ENCODE measurements at regions of chr7 and their contacts with region 1.

Region 1: DNA sequence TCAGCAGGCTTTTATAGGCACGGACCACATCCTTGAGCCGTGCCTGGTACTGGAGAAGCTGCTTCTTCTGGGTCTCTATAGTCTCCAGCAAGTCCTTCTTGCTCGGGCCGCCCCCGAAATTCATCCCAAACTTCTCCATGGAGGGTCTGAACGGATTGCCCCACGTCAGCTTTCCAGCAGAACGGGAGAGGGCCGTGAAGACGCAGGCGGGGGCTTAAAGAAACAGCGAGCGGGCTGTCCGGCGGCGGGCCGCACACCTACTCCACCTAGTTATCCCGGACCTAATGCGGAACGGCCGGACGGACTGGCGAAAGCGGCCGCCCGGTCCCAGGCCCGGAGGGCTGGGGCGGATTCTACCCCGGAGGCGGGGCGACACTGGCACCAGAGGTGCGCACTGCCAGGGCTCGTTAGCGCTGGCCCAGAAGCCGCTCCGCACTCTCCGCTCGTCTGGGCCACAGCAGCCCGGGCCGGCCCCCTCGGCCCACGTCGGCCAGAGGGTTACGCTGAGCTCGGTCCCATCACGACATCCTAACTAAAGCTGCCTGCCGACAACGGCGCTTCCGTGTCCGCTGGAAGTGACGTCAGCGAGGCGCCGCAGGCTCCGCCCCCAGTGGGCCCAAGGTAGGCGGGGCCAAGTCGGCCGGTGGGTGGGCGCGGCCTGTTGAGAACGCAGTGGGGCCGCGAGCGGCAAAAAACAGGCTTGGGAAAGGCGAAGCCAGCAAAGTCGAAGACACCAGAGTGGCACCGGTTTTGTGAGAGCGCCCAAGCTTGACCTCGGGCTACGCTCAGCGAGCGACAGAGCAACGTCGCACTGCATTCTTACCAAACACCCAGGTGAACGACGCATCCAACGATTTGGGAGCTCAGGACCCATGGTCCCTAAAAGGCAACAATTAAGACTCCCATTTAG is at the start of gene GCC1:
- DNase-seq: peak; percentile 90 to 97 (median 93)
- H3K4me3 ChIP-seq: peak within 1 kb of the TSS; percentile 64 to 100 (median 95)
- H3K27ac ChIP-seq: peak within 1 kb of the TSS in 57 of 59 donors; percentile 21 to 94 (median 82)
- H3K27me3 ChIP-seq: no peaks in the 10 kb centered on the region
- CTCF ChIP-seq: peak in 16 of 56 donors; percentile 1 to 42 (median 20)
- total RNA-seq, gene GCC1: 9.6 to 17.6 (median 12.6) TPM

Region 2: DNA sequence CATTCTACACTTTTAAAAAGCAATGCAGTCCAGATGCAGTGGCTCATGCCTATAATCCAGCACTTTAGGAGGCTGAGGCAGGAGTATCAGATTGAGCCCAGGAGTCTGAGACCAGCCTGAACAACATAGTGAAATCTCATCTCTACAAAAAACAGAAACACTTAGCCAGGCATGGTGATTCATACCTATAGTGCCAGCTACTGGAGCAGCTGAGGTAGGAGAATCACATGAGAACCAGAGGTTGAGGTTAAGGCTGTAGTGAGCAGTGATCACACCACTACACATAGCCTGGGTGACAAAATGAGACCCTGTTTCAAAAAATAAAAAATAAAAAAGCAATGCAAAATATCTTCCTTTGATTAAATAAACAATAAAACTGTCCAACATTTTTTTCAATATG is 537.8 kb before region 1 on chr7:
- intact Hi-C with region 1: no loop called
- DNase-seq: no peak
- H3K4me3 ChIP-seq: no peak overlapping the region
- H3K27ac ChIP-seq: no peak overlapping the region
- H3K27me3 ChIP-seq: no peaks in the 10 kb centered on the region
- CTCF ChIP-seq: no peak

Region 3: DNA sequence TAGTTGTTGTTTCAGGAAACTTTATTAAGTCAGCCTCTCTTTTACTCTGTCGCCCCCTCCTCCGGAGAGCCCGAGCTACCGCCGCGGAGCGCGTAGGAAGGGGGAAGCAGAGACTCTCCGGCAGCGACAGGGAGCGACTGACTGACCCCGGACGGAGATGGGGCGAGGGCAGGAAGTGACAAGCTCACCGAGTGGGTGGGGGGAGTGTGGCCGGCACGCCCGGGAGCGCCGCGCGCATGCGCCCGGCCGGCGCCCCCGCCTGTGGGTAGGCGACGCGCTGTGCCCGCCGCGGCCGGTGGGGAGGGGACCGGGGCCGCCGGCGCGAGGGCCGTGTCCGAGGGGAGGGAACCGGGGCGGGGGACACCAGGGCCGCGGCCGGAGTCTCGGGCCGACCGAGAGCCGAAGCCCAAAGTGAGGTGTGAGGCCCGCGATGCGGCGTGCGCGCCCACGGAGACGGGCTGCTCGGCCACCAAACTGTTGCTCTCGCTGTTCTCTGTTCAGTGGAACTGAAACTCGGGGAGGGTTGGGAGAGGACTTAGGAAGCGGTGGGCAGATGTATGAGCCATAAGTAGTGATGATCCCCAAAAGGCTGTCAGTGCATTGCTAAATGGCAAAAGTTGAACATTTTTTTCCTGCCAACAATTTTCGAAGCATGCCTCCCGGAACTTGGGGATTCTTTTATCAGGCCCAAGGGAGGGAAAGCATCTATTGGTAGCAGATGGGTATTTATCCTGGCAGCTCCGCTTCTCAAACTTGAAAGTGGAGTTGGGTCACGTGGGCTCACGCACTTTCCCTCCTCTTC is 192.5 kb before region 1 on chr7 and contains the start of gene ZNF800:
- intact Hi-C with region 1: loop called (anchors 5 to 10 kb)
- DNase-seq: peak; percentile 77 to 94 (median 91)
- H3K4me3 ChIP-seq: peak within 1 kb of the TSS; percentile 61 to 100 (median 96)
- H3K27ac ChIP-seq: peak within 1 kb of the TSS; percentile 42 to 97 (median 93)
- H3K27me3 ChIP-seq: no peaks in the 10 kb centered on the region
- CTCF ChIP-seq: peak in 14 of 56 donors; percentile 4 to 34 (median 14)
- total RNA-seq, gene ZNF800: 34.6 to 62.9 (median 48.6) TPM

Region 4: DNA sequence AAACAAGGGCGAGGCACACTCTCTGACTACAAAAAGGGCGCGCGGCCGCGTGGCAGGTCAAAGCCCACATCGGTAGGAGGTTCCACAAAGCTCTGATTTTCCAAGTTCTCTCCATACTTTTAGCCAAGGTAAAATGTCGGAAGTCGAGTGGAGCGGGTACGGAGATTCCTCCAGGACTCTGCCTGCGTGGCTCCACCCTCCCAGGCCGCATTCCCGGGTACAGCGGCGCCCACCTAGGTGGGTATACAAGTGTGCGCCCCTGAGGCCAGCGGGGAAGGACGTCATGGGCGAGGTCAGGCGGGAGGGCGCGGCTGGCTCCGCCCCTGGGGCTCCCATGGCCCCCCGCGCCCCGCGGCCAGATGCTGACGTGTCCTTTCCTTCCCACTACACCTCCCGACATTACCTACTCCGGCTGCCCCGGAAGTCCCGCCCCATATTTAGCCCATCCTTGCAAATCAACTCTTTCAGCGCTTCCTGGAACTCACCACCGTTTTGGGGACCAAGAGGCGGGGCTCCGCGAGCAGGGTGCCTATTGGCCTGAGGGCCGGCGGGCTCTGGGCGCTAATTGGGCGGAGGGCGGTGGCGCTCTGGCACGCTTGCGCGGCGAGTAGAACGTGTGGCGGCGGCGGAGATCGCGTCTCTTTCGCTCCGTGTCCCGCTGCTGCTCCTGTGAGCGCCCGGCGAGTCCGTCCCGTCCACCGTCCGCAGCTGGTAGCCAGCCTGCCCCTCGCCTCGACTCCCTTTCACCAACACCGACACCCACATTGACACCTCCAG is 66.4 kb after region 1 on chr7 and contains the start of gene SND1:
- intact Hi-C with region 1: loop called (anchors 2 kb)
- DNase-seq: peak; percentile 96 to 99 (median 99)
- H3K4me3 ChIP-seq: peak within 1 kb of the TSS; percentile 67 to 100 (median 94)
- H3K27ac ChIP-seq: peak within 1 kb of the TSS in 58 of 59 donors; percentile 29 to 98 (median 88)
- H3K27me3 ChIP-seq: no peaks in the 10 kb centered on the region
- CTCF ChIP-seq: peak in 37 of 56 donors; percentile 3 to 52 (median 30)
- total RNA-seq, gene SND1: 72.4 to 152 (median 112) TPM

Region 5: DNA sequence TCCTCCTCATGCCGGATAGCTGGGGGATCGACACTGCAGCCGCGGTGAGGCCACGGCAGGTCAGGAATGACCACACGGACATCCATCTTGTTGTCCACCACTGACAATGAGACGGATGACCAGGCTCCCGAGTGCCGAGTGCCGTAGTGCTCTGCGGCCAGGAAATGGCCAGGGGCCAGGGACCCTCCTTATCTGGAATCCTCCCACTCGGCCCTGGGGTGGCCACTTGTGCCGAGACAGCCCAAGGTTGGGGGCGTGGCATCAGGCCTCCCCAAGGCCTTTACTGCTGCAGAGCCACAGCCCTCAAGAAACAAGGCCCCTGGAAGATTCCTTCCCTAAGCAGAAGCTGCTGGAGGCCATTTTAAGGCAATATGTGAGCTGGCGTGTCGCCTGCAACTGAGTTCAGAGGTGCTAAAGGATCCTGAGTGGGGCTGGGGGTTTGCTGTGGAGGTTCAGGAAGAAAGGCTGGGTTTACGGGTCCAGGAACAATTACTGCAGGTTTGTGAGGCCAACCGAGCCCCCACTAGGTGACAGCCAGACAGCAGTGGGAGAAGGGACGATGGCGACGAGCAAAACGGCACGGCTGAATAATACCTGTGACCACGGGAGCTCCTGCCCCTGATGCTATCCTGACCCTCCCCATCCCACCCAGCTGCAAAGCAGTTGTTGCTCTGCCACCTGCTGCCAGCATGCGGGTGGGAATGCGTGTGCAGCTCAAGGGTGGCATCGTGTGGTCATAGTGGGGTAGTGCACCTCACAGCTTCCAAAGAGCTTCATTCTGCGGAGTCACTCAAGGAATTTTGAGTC is 624.1 kb after region 1 on chr7:
- intact Hi-C with region 1: loop called in 1 of 2 experiments (anchors 10 kb)
- DNase-seq: peak in 8 of 10 donors; percentile 62 to 82 (median 72)
- H3K4me3 ChIP-seq: no peak overlapping the region
- H3K27ac ChIP-seq: peak overlapping the region in 4 of 59 donors; percentile 24 to 48 (median 34)
- H3K27me3 ChIP-seq: peaks cover 0 to 5% (median 0%) of the 10 kb centered on the region in 45 donors
- CTCF ChIP-seq: peak; percentile 90 to 100 (median 99)